CD8-positive, alpha-beta T cell (primary cell): ENCODE measurements at regions of chr17 and their contacts with region 1.

Region 1: DNA sequence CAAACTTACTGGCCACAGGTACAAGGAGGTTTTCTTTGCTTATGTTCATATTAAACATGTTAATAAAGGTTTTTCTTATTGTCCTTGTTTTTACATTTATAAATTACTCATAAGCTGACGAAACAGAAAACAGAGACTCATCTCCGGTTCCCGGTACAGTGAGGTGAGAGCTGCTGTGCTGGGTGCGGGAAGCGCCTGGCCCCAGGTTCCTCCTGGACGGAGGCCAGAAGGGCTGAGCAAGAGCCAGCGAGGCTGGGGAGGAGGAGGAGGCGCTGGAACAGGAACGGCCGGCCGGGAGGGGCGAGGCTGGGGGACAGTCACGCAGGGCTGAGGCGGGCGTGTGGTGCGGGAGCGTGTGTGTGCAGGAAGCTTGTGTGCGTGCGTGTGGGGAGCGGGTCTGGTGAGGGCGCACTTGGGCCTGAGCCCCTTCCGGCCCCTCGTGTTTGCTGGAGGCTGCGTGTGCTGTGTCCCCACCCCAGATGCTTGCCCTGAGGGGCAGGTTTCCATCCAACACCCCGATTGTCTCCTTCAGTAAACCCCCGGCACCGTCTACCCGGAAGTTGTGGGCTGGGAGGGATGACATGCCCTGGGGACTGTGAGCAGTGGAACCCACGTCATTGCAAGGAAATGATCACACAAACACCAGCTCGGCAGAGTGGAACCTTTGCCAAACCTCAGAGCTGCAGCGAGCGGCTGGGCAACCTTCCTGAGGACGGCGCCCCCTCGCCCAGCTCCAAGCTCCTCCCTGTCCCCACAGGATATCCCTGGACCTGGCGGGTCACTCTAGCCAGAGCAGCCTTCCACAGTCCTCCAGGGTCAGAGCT is 19.5 kb downstream of the CD7 start:
- DNase-seq: peak; percentile 84 to 99 (median 93)
- ATAC-seq: peak; percentile 72
- H3K4me3 ChIP-seq: peak overlapping the region; percentile 34 to 62
- H3K4me3 Mint-ChIP-seq: peak overlapping the region; percentile 93
- H3K27ac ChIP-seq: peak overlapping the region; percentile 90 to 98
- H3K27ac Mint-ChIP-seq: peak overlapping the region; percentile 100
- H3K4me1 ChIP-seq: peaks cover 66% of the 10 kb centered on the region
- H3K4me1 Mint-ChIP-seq: peaks cover 81% of the 10 kb centered on the region
- H3K27me3 ChIP-seq: no peaks in the 10 kb centered on the region
- H3K27me3 Mint-ChIP-seq: no peaks in the 10 kb centered on the region
- CTCF ChIP-seq: no peak

Region 2: DNA sequence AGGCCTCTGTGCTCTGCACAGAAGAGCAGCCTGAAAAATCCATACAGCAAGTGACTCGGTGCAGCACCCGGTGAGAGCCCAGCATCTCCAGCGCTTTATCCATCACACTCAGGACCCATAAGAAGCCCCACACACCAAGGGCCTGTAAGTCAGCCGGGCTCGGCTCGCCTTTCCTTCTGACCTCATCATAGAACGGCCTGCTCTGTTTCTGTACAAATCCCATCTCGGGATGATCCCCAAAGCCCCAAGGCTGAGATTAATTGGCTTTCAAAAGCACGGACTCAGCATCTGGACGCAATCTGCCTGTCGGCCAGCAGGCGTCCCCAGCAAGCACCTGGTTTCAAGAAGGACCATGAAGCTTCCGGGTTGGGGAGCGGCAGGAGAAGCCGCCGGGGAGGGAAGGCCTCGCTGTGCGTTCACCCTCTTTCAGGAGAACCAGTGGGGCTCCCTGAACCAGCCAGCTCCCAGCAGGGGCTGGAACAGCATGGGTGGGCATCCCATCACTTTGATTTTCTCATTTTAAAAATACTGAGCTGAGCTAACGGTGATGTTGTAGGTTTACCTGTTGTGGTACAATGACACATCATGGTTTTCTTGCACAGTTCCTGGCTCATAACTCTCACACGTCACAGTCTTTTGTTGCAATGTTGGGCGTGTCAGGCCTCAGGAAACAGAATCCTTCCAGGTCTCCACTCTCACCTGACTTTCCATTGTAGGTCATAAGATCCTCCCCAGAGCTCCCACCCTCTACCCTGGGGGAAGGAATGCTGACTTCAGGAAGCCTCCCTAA is 92.0 kb before region 1 on chr17:
- CTCF ChIA-PET with region 1: interaction called, 12 read pairs
- POLR2A ChIA-PET with region 1: no interaction called
- intact Hi-C with region 1: loop called (anchors 1 to 5 kb)
- DNase-seq: peak; percentile 61 to 91 (median 82)
- ATAC-seq: peak; percentile 83
- H3K4me3 ChIP-seq: no peak overlapping the region
- H3K4me3 Mint-ChIP-seq: peak overlapping the region; percentile 60
- H3K27ac ChIP-seq: peak overlapping the region; percentile 56 to 89
- H3K27ac Mint-ChIP-seq: peak overlapping the region; percentile 96
- H3K4me1 ChIP-seq: peaks cover 24% of the 10 kb centered on the region
- H3K4me1 Mint-ChIP-seq: peaks cover 40% of the 10 kb centered on the region
- H3K27me3 ChIP-seq: no peaks in the 10 kb centered on the region
- H3K27me3 Mint-ChIP-seq: no peaks in the 10 kb centered on the region
- CTCF ChIP-seq: peak; percentile 88

Region 3: GRCh38 chr17:82236142-82236981 is 61.6 kb before region 1 on chr17:
- CTCF ChIA-PET with region 1: interaction called, 66 read pairs
- POLR2A ChIA-PET with region 1: interaction called, 8 read pairs
- intact Hi-C with region 1: loop called in 1 of 2 experiments (anchors 2 kb)
- DNase-seq: peak in 8 of 9 experiments; percentile 56 to 82 (median 72)
- ATAC-seq: peak; percentile 52
- H3K4me3 ChIP-seq: no peak overlapping the region
- H3K4me3 Mint-ChIP-seq: no peak overlapping the region
- H3K27ac ChIP-seq: peak overlapping the region in 1 of 2 experiments; percentile 6
- H3K27ac Mint-ChIP-seq: peak overlapping the region; percentile 55
- H3K4me1 ChIP-seq: peaks cover 54% of the 10 kb centered on the region
- H3K4me1 Mint-ChIP-seq: peaks cover 40% of the 10 kb centered on the region
- H3K27me3 ChIP-seq: no peaks in the 10 kb centered on the region
- H3K27me3 Mint-ChIP-seq: no peaks in the 10 kb centered on the region
- CTCF ChIP-seq: peak; percentile 82

Region 4: GRCh38 chr17:82315703-82316358 is 17.9 kb after region 1 on chr17:
- CTCF ChIA-PET with region 1: interaction called, 150 read pairs
- POLR2A ChIA-PET with region 1: interaction called, 80 read pairs
- intact Hi-C with region 1: loop called (anchors 1 kb)
- DNase-seq: peak in 8 of 9 experiments; percentile 46 to 83 (median 71)
- ATAC-seq: peak; percentile 43
- H3K4me3 ChIP-seq: peak overlapping the region; percentile 90 to 91
- H3K4me3 Mint-ChIP-seq: peak overlapping the region; percentile 94
- H3K27ac ChIP-seq: peak overlapping the region; percentile 76 to 78
- H3K27ac Mint-ChIP-seq: peak overlapping the region; percentile 94
- H3K4me1 ChIP-seq: peaks cover 35% of the 10 kb centered on the region
- H3K4me1 Mint-ChIP-seq: peaks cover 26% of the 10 kb centered on the region
- H3K27me3 ChIP-seq: no peaks in the 10 kb centered on the region
- H3K27me3 Mint-ChIP-seq: no peaks in the 10 kb centered on the region
- CTCF ChIP-seq: no peak

Region 5: DNA sequence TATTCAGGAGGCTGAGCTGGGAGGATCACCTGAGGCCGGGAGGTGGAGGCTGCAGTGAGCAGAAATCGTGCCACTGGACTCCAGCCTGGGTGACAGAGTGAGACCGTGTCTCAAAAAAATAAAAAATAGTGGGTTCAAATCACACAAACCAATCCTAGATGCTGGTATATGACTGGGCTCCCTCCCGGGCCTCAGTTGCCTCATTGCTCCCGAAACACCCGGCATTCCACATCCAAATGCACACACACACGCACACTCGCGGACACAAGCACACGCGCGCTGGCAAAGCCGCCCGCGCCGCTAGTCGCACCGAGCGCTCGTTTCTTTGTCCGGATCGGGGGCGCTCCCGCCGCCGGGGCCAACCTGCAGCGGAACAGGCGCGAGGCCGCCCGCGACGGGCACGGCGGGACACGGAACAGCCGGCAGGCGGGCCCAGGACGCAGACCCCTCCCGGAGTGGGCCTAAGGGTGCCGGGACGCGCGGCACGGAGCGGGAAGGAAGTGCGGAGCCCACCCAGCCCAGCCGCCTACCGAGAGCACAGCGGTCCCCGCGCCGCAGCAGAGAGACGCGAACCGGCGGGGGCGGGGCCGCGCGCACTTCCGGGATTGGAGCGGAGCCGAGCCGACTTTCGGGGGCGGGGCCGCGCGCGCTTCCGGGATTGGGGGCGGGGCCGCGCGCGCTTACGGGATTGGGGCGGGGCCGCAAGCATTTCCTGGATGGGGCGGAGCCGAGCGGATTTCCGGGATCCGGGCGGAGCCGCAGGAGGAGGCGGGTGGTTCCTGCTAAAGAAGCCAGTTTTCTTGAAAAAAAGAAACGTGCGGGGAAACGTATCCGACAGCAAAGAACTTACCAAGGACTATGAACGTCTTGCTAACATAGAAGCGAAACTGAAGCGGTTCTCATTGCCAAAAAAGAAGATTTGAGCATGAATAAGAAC is 152.5 kb after region 1 on chr17 and contains the start of gene CYBC1:
- CTCF ChIA-PET with region 1: no interaction called
- POLR2A ChIA-PET with region 1: no interaction called
- intact Hi-C with region 1: loop called (anchors 1 to 5 kb)
- DNase-seq: peak; percentile 86 to 97 (median 95)
- ATAC-seq: peak; percentile 65
- H3K4me3 ChIP-seq: peak within 1 kb of the TSS; percentile 57 to 77
- H3K4me3 Mint-ChIP-seq: peak within 1 kb of the TSS; percentile 90
- H3K27ac ChIP-seq: peak within 1 kb of the TSS; percentile 87 to 94
- H3K27ac Mint-ChIP-seq: peak within 1 kb of the TSS; percentile 95
- H3K4me1 ChIP-seq: peaks cover 26% of the 10 kb centered on the region
- H3K4me1 Mint-ChIP-seq: peaks cover 40% of the 10 kb centered on the region
- H3K27me3 ChIP-seq: no peaks in the 10 kb centered on the region
- H3K27me3 Mint-ChIP-seq: no peaks in the 10 kb centered on the region
- CTCF ChIP-seq: no peak
- total RNA-seq, gene CYBC1: 52.9 to 63.9 TPM

Region 6: GRCh38 chr17:82881900-82882714 is 584.2 kb after region 1 on chr17:
- CTCF ChIA-PET with region 1: no interaction called
- POLR2A ChIA-PET with region 1: no interaction called
- intact Hi-C with region 1: loop called in 1 of 2 experiments (anchors 5 kb)
- DNase-seq: no peak
- ATAC-seq: no peak
- H3K4me3 ChIP-seq: peak overlapping the region; percentile 14 to 70
- H3K4me3 Mint-ChIP-seq: peak overlapping the region; percentile 82
- H3K27ac ChIP-seq: peak overlapping the region; percentile 74
- H3K27ac Mint-ChIP-seq: peak overlapping the region; percentile 99
- H3K4me1 ChIP-seq: peaks cover 63% of the 10 kb centered on the region
- H3K4me1 Mint-ChIP-seq: peaks cover 71% of the 10 kb centered on the region
- H3K27me3 ChIP-seq: no peaks in the 10 kb centered on the region
- H3K27me3 Mint-ChIP-seq: no peaks in the 10 kb centered on the region
- CTCF ChIP-seq: no peak